ENCODE measurements at regions of chr10 and their contacts with region 1.

Region 1: DNA sequence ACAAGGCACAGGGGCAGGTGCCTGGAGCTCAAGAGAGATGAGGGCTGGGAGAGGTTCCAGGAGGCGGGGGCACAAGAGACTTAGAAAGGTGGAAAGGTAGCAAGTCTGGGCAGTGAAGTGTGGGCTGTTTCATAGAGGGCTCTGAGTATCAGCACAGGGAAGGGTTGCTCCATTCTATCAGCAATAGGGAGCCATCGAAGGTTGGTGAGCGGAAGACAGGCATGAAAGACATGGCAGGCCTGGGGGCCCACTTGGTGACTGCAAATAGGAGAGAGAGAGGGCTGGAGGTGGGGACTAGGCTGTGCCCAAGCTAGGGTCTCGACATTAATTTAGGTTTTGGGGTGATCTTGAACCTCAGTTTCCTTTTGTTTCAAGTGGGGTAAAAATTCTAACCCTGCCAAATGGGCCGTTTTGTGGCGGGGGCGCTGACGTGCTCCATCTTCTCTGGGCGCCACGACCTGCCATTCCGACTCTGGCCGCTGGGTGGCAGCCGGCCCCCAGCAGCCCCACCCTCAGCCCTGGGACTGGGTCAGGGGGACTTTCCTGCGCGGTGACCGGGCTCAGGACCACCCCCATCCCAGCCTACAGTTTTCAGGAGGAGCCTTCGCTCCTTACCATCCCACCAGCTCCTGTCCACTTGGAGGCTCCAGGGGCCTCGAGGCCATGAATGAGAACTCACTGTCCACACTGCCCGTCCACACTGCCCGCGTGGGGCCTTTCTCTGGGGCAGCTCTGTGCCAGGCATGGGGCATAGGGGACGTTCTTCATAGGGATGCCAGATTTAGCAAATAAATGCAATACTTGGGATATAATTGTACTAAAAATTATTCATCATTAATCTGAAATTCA is 37.2 kb upstream of the PCBD1 start:
- DNase-seq: peak; percentile 52
- ATAC-seq: peak; percentile 62
- H3K4me3 Mint-ChIP-seq: no peak overlapping the region
- H3K27ac Mint-ChIP-seq: no peak overlapping the region
- H3K4me1 Mint-ChIP-seq: peaks cover 5% of the 10 kb centered on the region
- H3K27me3 Mint-ChIP-seq: peaks cover 25% of the 10 kb centered on the region
- CTCF ChIP-seq: peak; percentile 75

Region 2: DNA sequence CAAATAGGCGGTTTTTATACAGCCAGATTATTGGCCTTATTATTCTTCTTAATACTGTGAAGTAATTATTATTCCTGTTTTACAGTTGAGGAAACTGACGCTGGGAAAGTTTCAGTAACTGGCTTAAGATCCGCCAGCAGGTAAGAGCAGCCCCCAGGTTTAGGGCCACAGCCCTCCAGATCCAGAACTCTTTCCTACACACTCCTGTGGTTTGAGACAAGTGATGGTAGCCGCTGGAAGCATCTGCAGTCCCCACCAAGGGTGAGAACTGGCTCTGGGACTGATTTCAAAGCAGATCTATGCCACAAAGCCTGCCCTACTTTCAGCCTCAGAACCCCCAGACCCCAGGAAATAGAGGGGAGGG is 283.7 kb after region 1 on chr10:
- CTCF ChIA-PET with region 1: no interaction called
- POLR2A ChIA-PET with region 1: no interaction called
- intact Hi-C with region 1: loop called (anchors 1 kb)
- DNase-seq: no peak
- ATAC-seq: no peak
- H3K4me3 Mint-ChIP-seq: no peak overlapping the region
- H3K27ac Mint-ChIP-seq: no peak overlapping the region
- H3K4me1 Mint-ChIP-seq: peaks cover 11% of the 10 kb centered on the region
- H3K27me3 Mint-ChIP-seq: peaks cover 66% of the 10 kb centered on the region
- CTCF ChIP-seq: no peak

Region 3: DNA sequence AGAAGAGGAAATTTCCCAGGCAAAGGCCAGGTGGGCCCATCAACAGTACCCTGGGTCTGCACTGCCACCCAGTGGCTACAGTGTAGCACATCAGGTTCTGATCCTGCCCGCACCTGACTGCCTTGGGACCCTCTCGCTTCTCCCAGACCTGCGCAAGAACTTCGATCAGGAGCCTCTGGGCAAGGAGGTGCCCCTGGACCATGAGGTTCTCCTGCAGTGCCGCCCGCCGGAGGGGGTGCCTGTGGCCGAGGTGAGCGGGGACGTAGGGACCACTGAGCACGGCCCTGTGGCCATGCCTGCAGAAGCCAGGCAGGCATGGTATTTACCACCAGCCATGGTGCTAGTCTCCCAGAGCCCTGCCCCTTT is 359.6 kb after region 1 on chr10:
- CTCF ChIA-PET with region 1: interaction called, 3 read pairs
- POLR2A ChIA-PET with region 1: no interaction called
- intact Hi-C with region 1: loop called (anchors 1 kb)
- DNase-seq: peak; percentile 26
- ATAC-seq: peak; percentile 76
- H3K4me3 Mint-ChIP-seq: no peak overlapping the region
- H3K27ac Mint-ChIP-seq: no peak overlapping the region
- H3K4me1 Mint-ChIP-seq: peaks cover 4% of the 10 kb centered on the region
- H3K27me3 Mint-ChIP-seq: peaks cover under 1% of the 10 kb centered on the region
- CTCF ChIP-seq: no peak

Region 4: GRCh38 chr10:72215652-72216549 is 1290.3 kb after region 1 on chr10 and contains the starts of genes ANAPC16 and ASCC1:
- CTCF ChIA-PET with region 1: no interaction called
- POLR2A ChIA-PET with region 1: no interaction called
- intact Hi-C with region 1: no loop called
- DNase-seq: peak; percentile 98
- ATAC-seq: peak; percentile 83
- H3K4me3 Mint-ChIP-seq: peak within 1 kb of the TSS; percentile 96
- H3K27ac Mint-ChIP-seq: peak within 1 kb of the TSS; percentile 99
- H3K4me1 Mint-ChIP-seq: peaks cover 62% of the 10 kb centered on the region
- H3K27me3 Mint-ChIP-seq: no peaks in the 10 kb centered on the region
- CTCF ChIP-seq: no peak
- total RNA-seq, gene ANAPC16: 128 and 137 TPM in 2 replicates
- total RNA-seq, gene ASCC1: 42.6 and 42.9 TPM in 2 replicates

Measured in activated B cell treated with CpG ODN at 0.5 μM for 24 hours (primary cell).